Pancreas (tissue), 10 donors: ENCODE measurements at regions of chr1 and their contacts with region 1.

Region 1: GRCh38 chr1:115771847-115772457 is 3.4 kb upstream of the CASQ2 start:
- DNase-seq: peak in 4 of 6 donors; percentile 59 to 74 (median 65)
- ATAC-seq: peak; percentile 91 to 97 (median 94)
- H3K4me3 ChIP-seq: peak overlapping the region in 3 of 4 donors; percentile 2 to 24 (median 9)
- H3K27ac ChIP-seq: peak overlapping the region; percentile 39 to 73 (median 66)
- H3K4me1 ChIP-seq: no peaks in the 10 kb centered on the region
- H3K27me3 ChIP-seq: no peaks in the 10 kb centered on the region
- CTCF ChIP-seq: peak; percentile 46 to 72 (median 55)

Region 2: GRCh38 chr1:115609021-115609420 is 162.9 kb before region 1 on chr1:
- intact Hi-C with region 1: loop called in 2 of 3 experiments (anchors 5 to 10 kb)
- DNase-seq: no peak
- ATAC-seq: no peak
- H3K4me3 ChIP-seq: no peak overlapping the region
- H3K27ac ChIP-seq: no peak overlapping the region
- H3K4me1 ChIP-seq: no peaks in the 10 kb centered on the region
- H3K27me3 ChIP-seq: no peaks in the 10 kb centered on the region
- CTCF ChIP-seq: no peak

Region 3: GRCh38 chr1:115722221-115722620 is 49.7 kb before region 1 on chr1:
- intact Hi-C with region 1: loop called in 1 of 3 experiments (anchors 5 kb)
- DNase-seq: no peak
- ATAC-seq: no peak
- H3K4me3 ChIP-seq: no peak overlapping the region
- H3K27ac ChIP-seq: no peak overlapping the region
- H3K4me1 ChIP-seq: no peaks in the 10 kb centered on the region
- H3K27me3 ChIP-seq: no peaks in the 10 kb centered on the region
- CTCF ChIP-seq: no peak